Endothelial cell of umbilical vein (primary cell): ENCODE measurements at regions of chr11 and their contacts with region 1.

Region 1: GRCh38 chr11:87722756-87723565 is 452.3 kb downstream of the RAB38 start:
- DNase-seq: peak; percentile 14
- H3K4me3 ChIP-seq: no peak overlapping the region
- H3K27ac ChIP-seq: no peak overlapping the region
- H3K4me1 ChIP-seq: no peaks in the 10 kb centered on the region
- H3K27me3 ChIP-seq: no peaks in the 10 kb centered on the region
- CTCF ChIP-seq: peak; percentile 68 to 69
- POLR2A ChIP-seq: no peak

Region 2: GRCh38 chr11:87545858-87546257 is 177.1 kb before region 1 on chr11:
- CTCF ChIA-PET with region 1: no interaction called
- POLR2A ChIA-PET with region 1: no interaction called
- dilution Hi-C with region 1: no loop called
- intact Hi-C with region 1: loop called (anchors 10 kb)
- DNase-seq: no peak
- H3K4me3 ChIP-seq: no peak overlapping the region
- H3K27ac ChIP-seq: no peak overlapping the region
- H3K4me1 ChIP-seq: no peaks in the 10 kb centered on the region
- H3K27me3 ChIP-seq: no peaks in the 10 kb centered on the region
- CTCF ChIP-seq: no peak
- POLR2A ChIP-seq: no peak

Region 3: GRCh38 chr11:88087337-88087736 is 364.4 kb after region 1 on chr11:
- CTCF ChIA-PET with region 1: no interaction called
- POLR2A ChIA-PET with region 1: no interaction called
- dilution Hi-C with region 1: no loop called
- intact Hi-C with region 1: no loop called
- DNase-seq: no peak
- H3K4me3 ChIP-seq: no peak overlapping the region
- H3K27ac ChIP-seq: no peak overlapping the region
- H3K4me1 ChIP-seq: no peaks in the 10 kb centered on the region
- H3K27me3 ChIP-seq: peaks cover 0 to 3% of the 10 kb centered on the region in 2 experiments
- CTCF ChIP-seq: no peak
- POLR2A ChIP-seq: no peak